ENCODE measurements at regions of chrX and their contacts with region 1.

Region 1: DNA sequence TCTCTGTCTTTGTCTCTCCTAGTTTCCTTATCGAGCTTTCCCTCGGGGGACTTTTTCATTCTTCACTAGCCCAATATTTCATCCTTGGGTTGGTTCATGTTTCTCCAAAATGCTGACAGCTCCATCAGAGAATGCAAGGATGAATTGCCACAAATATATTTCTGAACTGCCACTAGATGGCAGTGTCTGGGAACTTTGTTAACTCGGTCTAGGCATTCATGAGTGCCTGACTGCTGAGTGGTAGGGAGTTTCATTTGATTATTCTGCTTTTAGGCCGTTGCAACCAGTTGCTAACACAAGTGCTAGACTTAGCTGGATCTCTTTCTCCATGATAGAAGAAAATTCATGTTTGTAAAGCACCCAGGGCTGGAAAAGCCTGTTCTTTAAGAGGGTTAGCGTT is 73.5 kb upstream of the RAP2C start:
- DNase-seq: peak; percentile 57
- ATAC-seq: peak; percentile 83
- H3K4me3 ChIP-seq: no peak overlapping the region
- H3K27ac ChIP-seq: no peak overlapping the region
- H3K4me1 ChIP-seq: no peaks in the 10 kb centered on the region
- H3K27me3 ChIP-seq: peaks cover 1% of the 10 kb centered on the region; the same call in 1 of the 2 replicates
- CTCF ChIP-seq: peak; percentile 66
- POLR2A ChIP-seq: no peak
- RAD21 ChIP-seq: peak; percentile 56

Region 2: DNA sequence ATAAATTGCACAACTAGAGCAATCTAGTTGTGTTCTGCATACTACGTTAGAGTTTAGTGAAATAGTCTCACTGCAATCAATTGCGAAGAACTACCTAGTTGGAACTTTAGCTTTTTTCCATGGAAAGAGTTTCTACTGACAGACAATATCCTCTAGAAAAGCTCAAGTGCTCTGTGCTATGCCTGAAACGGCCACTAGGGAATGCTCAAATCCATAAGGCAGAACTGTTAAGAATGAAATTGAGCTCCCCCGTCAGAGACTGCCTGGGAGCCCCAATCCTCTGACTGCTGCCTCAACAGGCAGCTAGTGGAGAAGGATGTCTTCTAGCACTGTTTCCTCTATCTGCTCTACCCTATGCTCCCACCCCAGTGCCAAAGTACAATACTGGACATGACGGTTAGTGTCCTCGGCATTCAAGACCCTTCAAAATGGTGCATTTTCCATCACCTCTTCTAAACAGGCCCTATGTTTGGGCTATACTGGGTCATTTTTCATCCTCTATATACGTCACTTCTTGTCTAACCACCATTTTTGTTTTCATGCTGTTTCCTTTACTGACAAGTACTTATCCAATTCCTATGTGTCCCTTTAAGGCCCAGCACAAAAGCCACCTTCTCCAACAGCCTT is 200.2 kb before region 1 on chrX:
- CTCF ChIA-PET with region 1: no interaction called
- POLR2A ChIA-PET with region 1: no interaction called
- dilution Hi-C with region 1: no loop called
- in situ Hi-C with region 1: no loop called
- intact Hi-C with region 1: no loop called
- DNase-seq: peak; percentile 61
- ATAC-seq: peak; percentile 94
- H3K4me3 ChIP-seq: no peak overlapping the region
- H3K27ac ChIP-seq: no peak overlapping the region
- H3K4me1 ChIP-seq: no peaks in the 10 kb centered on the region
- H3K27me3 ChIP-seq: peaks cover 11% of the 10 kb centered on the region
- CTCF ChIP-seq: peak; percentile 67
- POLR2A ChIP-seq: no peak
- RAD21 ChIP-seq: peak; percentile 62

Region 3: DNA sequence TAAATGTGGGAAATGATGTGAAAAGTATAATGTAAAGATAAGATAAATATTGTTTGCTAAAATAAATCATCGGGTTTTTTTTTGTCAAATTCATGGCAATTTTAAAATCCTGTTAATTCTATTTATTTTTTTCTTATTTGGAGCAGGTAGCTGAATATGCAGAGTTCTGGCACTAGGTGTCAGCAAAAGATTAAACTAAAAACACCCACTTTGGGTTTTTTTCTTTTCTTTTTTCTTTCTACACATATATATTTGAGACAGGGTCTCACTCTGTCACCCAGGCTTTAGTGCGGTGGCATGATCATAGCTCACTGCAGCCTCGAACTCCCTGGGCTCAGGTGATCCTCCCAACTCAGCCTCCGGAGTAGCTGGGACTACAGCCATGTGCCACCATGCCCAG is 66.6 kb before region 1 on chrX:
- CTCF ChIA-PET with region 1: interaction called, 3 read pairs
- POLR2A ChIA-PET with region 1: no interaction called
- dilution Hi-C with region 1: no loop called
- in situ Hi-C with region 1: no loop called
- intact Hi-C with region 1: loop called (anchors 1 kb)
- DNase-seq: peak; percentile 15
- ATAC-seq: no peak
- H3K4me3 ChIP-seq: no peak overlapping the region
- H3K27ac ChIP-seq: no peak overlapping the region
- H3K4me1 ChIP-seq: peaks cover 2% of the 10 kb centered on the region; the same call in 1 of the 2 replicates
- H3K27me3 ChIP-seq: peaks cover 4% of the 10 kb centered on the region; the same call in 1 of the 2 replicates
- CTCF ChIP-seq: peak; percentile 55
- POLR2A ChIP-seq: no peak
- RAD21 ChIP-seq: peak; percentile 47

Region 4: GRCh38 chrX:132488819-132489577 is 196.2 kb after region 1 on chrX and contains the start of gene MBNL3:
- CTCF ChIA-PET with region 1: interaction called, 4 read pairs
- POLR2A ChIA-PET with region 1: no interaction called
- dilution Hi-C with region 1: no loop called
- in situ Hi-C with region 1: no loop called
- intact Hi-C with region 1: loop called (anchors 5 kb)
- DNase-seq: peak; percentile 5
- ATAC-seq: peak; percentile 88
- H3K4me3 ChIP-seq: peak within 1 kb of the TSS; percentile 46
- H3K27ac ChIP-seq: no peak within 1 kb of the TSS
- H3K4me1 ChIP-seq: no peaks in the 10 kb centered on the region
- H3K27me3 ChIP-seq: peaks cover 19% of the 10 kb centered on the region
- CTCF ChIP-seq: no peak
- POLR2A ChIP-seq: no peak
- RAD21 ChIP-seq: no peak
- total RNA-seq, gene MBNL3: 1.1 TPM in 2 replicates

Region 5: DNA sequence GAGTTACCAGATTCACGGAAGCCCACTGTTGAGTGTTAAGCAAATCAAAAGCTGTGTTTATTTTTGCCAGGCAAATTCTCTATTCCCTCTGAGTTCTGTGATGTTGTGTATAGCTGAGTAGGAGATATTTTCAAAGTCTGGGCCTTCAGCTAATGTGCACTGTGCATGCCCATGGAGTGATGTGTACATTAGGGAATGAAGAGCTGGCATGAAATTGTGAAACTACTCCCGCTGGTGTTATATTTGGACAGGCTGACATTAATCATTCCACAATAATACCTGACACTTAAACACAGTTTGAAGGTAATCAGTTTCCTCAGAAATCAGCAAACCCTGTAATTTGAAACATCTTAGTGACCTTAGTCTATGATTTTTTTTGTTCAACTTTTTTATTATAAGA is 284.1 kb after region 1 on chrX:
- CTCF ChIA-PET with region 1: no interaction called
- POLR2A ChIA-PET with region 1: no interaction called
- dilution Hi-C with region 1: no loop called
- in situ Hi-C with region 1: no loop called
- intact Hi-C with region 1: no loop called
- DNase-seq: no peak
- ATAC-seq: no peak
- H3K4me3 ChIP-seq: no peak overlapping the region
- H3K27ac ChIP-seq: no peak overlapping the region
- H3K4me1 ChIP-seq: no peaks in the 10 kb centered on the region
- H3K27me3 ChIP-seq: 0 out of 2 replicates have a peak, but pooled peaks cover 2% of the 10 kb centered on the region
- CTCF ChIP-seq: no peak
- POLR2A ChIP-seq: no peak
- RAD21 ChIP-seq: no peak

Region 6: GRCh38 chrX:132592880-132593279 is 300.1 kb after region 1 on chrX:
- CTCF ChIA-PET with region 1: interaction called, 4 read pairs
- POLR2A ChIA-PET with region 1: no interaction called
- dilution Hi-C with region 1: no loop called
- in situ Hi-C with region 1: no loop called
- intact Hi-C with region 1: loop called (anchors 5 kb)
- DNase-seq: no peak
- ATAC-seq: peak; percentile 51; the same call in 1 of the 2 replicates
- H3K4me3 ChIP-seq: no peak overlapping the region
- H3K27ac ChIP-seq: no peak overlapping the region
- H3K4me1 ChIP-seq: no peaks in the 10 kb centered on the region
- H3K27me3 ChIP-seq: peaks cover 4% of the 10 kb centered on the region; the same call in 1 of the 2 replicates
- CTCF ChIP-seq: no peak
- POLR2A ChIP-seq: no peak
- RAD21 ChIP-seq: no peak

Measured in IMR-90 (cell line).